K562 (cell line): ENCODE measurements at regions of chrX and their contacts with region 1.

Region 1: GRCh38 chrX:38754102-38754790 is 47.0 kb upstream of the MID1IP1 start:
- DNase-seq: peak; percentile 25 to 65 (median 39)
- ATAC-seq: peak; percentile 86
- H3K4me3 ChIP-seq: no peak overlapping the region
- H3K27ac ChIP-seq: no peak overlapping the region
- H3K4me1 ChIP-seq: no peaks in the 10 kb centered on the region; a peak in 2 of 5 replicates
- H3K27me3 ChIP-seq: no peaks in the 10 kb centered on the region; a peak in 2 of 5 replicates
- CTCF ChIP-seq: peak; percentile 61 to 71 (median 63)
- EP300 ChIP-seq: no peak
- POLR2A ChIP-seq: no peak
- RAD21 ChIP-seq: peak; percentile 78 to 79

Region 2: GRCh38 chrX:38664285-38664684 is 90.0 kb before region 1 on chrX:
- CTCF ChIA-PET with region 1: no interaction called
- POLR2A ChIA-PET with region 1: no interaction called
- in situ Hi-C with region 1: no loop called
- intact Hi-C with region 1: loop called (anchors 5 kb)
- DNase-seq: peak; percentile 33 to 64 (median 38)
- ATAC-seq: peak; percentile 84
- H3K4me3 ChIP-seq: no peak overlapping the region
- H3K27ac ChIP-seq: no peak overlapping the region
- H3K4me1 ChIP-seq: peaks cover 0 to 7% of the 10 kb centered on the region in 2 experiments; a peak in 2 of 5 replicates
- H3K27me3 ChIP-seq: no peaks in the 10 kb centered on the region
- CTCF ChIP-seq: peak; percentile 52 to 59 (median 55); a peak in 5 of 6 replicates
- EP300 ChIP-seq: no peak
- POLR2A ChIP-seq: no peak
- RAD21 ChIP-seq: peak; percentile 63 to 74

Region 3: DNA sequence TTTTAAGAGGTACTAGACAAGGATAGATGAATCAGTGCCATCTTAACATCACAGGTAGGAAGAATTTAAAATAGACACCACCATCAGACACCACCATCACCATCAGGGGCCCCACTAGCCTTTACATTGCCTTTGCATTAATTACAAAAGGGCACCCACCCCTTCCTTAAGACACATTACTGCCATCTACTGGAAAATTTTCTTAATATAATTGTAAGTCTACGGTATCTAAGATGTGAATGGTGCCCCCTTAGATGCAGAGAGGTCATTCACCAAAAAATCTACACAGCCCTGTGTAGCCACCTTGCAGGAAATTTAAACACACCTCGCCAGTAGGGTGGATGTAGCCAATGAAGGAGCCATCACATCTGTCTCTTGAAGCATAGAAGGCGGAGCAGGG is 231.1 kb after region 1 on chrX:
- CTCF ChIA-PET with region 1: no interaction called
- POLR2A ChIA-PET with region 1: no interaction called
- in situ Hi-C with region 1: no loop called
- intact Hi-C with region 1: loop called (anchors 2 kb)
- DNase-seq: peak; percentile 9 to 36 (median 18)
- ATAC-seq: peak; percentile 81
- H3K4me3 ChIP-seq: no peak overlapping the region
- H3K27ac ChIP-seq: no peak overlapping the region
- H3K4me1 ChIP-seq: peaks cover 0 to 7% of the 10 kb centered on the region in 2 experiments; a peak in 3 of 5 replicates
- H3K27me3 ChIP-seq: no peaks in the 10 kb centered on the region
- CTCF ChIP-seq: peak; percentile 25 to 51 (median 50); a peak in 3 of 6 replicates
- EP300 ChIP-seq: no peak
- POLR2A ChIP-seq: no peak
- RAD21 ChIP-seq: peak; percentile 44 to 66

Region 4: DNA sequence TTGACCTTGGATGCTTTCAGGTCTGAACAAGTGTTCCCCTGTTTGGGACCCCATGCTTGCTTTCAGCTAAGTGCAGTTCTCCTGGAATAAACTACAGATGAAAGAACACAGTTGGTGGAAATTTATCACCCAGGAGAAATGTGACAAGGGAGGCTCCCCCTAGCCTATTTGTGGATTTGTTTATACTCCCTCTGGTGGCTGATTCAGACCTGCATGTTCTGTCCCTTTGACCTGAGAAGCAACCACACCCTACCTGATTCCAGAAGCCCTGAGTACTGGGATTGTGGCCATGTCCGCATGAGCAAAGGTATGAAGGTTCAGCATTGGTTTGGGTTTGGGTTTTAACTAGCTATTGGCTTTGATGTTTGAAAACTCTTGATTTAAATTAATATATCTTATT is 487.9 kb after region 1 on chrX:
- CTCF ChIA-PET with region 1: interaction called, 7 read pairs
- POLR2A ChIA-PET with region 1: no interaction called
- in situ Hi-C with region 1: no loop called
- intact Hi-C with region 1: loop called (anchors 5 kb)
- DNase-seq: peak; percentile 37 to 56 (median 52)
- ATAC-seq: peak; percentile 91
- H3K4me3 ChIP-seq: no peak overlapping the region
- H3K27ac ChIP-seq: no peak overlapping the region
- H3K4me1 ChIP-seq: no peaks in the 10 kb centered on the region
- H3K27me3 ChIP-seq: no peaks in the 10 kb centered on the region
- CTCF ChIP-seq: peak; percentile 58 to 68 (median 58)
- EP300 ChIP-seq: no peak
- POLR2A ChIP-seq: no peak
- RAD21 ChIP-seq: peak; percentile 11 to 59; a peak in 3 of 4 replicates